Mammary epithelial cell (primary cell): ENCODE measurements at regions of chr6 and their contacts with region 1.

Region 1: DNA sequence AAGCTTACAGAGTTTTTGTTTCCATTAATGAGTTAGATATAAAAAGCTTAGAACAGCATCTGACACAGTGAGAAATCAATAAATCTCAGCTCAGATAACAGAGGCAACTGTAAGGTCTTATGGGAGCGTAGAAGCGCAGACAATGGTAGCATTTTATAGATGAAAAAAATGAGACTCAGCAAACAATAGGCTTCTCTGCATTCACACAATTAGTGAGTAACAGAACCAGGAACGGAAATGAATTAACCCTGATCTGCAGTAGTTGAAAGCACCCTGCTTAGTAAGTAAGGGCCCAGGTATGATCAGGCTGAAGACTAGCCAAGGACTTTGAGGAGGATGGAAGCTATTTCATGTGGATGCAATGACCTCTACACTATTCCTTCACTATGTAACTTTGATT is 147.2 kb upstream of the EYA4 start:
- DNase-seq: peak; percentile 56
- H3K4me3 ChIP-seq: no peak overlapping the region
- H3K27ac ChIP-seq: no peak overlapping the region
- H3K4me1 ChIP-seq: peaks cover 10% of the 10 kb centered on the region
- H3K27me3 ChIP-seq: no peaks in the 10 kb centered on the region
- CTCF ChIP-seq: no peak

Region 2: GRCh38 chr6:133040094-133040802 is 53.7 kb before region 1 on chr6:
- CTCF ChIA-PET with region 1: no interaction called
- dilution Hi-C with region 1: loop called (anchors 5 kb)
- in situ Hi-C with region 1: no loop called
- intact Hi-C with region 1: no loop called
- DNase-seq: peak; percentile 6
- H3K4me3 ChIP-seq: no peak overlapping the region
- H3K27ac ChIP-seq: no peak overlapping the region
- H3K4me1 ChIP-seq: no peaks in the 10 kb centered on the region
- H3K27me3 ChIP-seq: peaks cover 2% of the 10 kb centered on the region
- CTCF ChIP-seq: peak; percentile 29 to 64